IMR-90 (cell line): ENCODE measurements at regions of chr9 and their contacts with region 1.

Region 1: GRCh38 chr9:100120286-100120685 is 21.2 kb downstream of the INVS start:
- DNase-seq: no peak
- ATAC-seq: no peak
- H3K4me3 ChIP-seq: no peak overlapping the region
- H3K27ac ChIP-seq: no peak overlapping the region
- H3K4me1 ChIP-seq: no peaks in the 10 kb centered on the region
- H3K27me3 ChIP-seq: no peaks in the 10 kb centered on the region
- CTCF ChIP-seq: no peak
- POLR2A ChIP-seq: no peak
- RAD21 ChIP-seq: no peak

Region 2: DNA sequence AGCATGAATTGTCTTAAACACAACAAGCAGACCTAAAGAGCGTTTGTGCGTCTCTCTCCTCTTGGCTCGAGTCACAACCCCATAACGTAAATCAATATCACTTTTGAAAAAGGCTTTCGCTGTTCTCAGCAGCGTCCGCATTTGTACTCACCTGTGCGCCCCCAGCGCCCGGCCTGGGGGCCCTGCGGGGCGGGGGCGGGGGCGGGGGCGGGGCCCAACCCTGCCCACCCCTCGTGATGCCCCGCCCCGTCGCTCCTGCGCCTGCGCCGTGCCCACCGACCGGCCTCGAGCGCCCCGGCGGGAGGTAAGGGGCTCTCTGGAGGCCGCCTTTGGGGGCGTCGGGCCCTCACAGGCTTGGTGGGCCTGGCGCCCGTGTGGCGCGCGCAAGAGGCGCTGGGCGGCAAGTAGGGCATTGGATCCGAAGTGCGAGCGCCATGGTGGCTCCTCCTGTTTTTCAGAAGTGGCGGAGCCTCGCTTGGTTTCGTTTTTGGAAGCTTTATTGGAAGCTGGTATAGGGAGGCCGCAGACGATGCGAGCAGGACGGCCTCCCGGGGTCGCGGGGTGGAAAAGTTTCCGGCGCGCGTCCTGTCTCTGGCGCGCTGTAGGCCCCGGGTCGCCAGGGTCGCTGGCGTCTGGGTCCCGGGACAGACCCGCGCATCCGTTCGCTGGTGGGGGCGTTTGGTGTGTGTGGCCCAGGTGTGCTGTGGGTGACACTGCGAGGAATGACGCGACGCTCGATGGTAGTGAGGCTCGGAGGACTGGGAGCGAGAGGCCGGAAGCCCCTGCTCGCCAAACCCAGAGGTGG is 213.7 kb before region 1 on chr9 and contains the start of gene STX17:
- CTCF ChIA-PET with region 1: no interaction called
- POLR2A ChIA-PET with region 1: no interaction called
- dilution Hi-C with region 1: no loop called
- in situ Hi-C with region 1: no loop called
- intact Hi-C with region 1: loop called (anchors 5 kb)
- DNase-seq: peak; percentile 69
- ATAC-seq: peak; percentile 97
- H3K4me3 ChIP-seq: peak within 1 kb of the TSS; percentile 99
- H3K27ac ChIP-seq: peak within 1 kb of the TSS; percentile 91
- H3K4me1 ChIP-seq: no peaks in the 10 kb centered on the region
- H3K27me3 ChIP-seq: 0 out of 2 replicates have a peak, but pooled peaks cover 2% of the 10 kb centered on the region
- CTCF ChIP-seq: no peak
- POLR2A ChIP-seq: peak; percentile 67
- RAD21 ChIP-seq: no peak
- total RNA-seq, gene STX17: 11.7 and 17.2 TPM in 2 replicates

Region 3: DNA sequence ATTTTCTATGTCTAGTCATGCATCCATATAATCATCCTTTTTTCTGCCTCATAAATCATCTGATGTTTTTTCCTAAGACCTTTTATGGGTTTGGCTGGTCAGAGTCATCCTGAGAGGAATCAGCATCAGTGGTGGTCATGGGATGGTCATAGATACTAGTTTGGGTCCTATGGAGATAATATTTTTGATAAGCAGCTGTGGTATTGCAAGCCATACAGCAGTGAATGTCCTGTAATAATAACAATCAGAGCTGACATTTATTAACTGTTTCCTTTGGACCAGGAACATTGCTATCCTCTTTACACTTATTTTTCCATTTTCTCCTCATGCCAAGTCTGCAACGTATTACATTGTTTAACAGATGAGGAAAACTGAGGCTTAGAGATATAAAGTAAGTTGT is 149.4 kb after region 1 on chr9:
- CTCF ChIA-PET with region 1: no interaction called
- POLR2A ChIA-PET with region 1: no interaction called
- dilution Hi-C with region 1: no loop called
- in situ Hi-C with region 1: no loop called
- intact Hi-C with region 1: no loop called
- DNase-seq: no peak
- ATAC-seq: no peak
- H3K4me3 ChIP-seq: no peak overlapping the region
- H3K27ac ChIP-seq: no peak overlapping the region
- H3K4me1 ChIP-seq: no peaks in the 10 kb centered on the region
- H3K27me3 ChIP-seq: no peaks in the 10 kb centered on the region
- CTCF ChIP-seq: no peak
- POLR2A ChIP-seq: no peak
- RAD21 ChIP-seq: no peak

Region 4: DNA sequence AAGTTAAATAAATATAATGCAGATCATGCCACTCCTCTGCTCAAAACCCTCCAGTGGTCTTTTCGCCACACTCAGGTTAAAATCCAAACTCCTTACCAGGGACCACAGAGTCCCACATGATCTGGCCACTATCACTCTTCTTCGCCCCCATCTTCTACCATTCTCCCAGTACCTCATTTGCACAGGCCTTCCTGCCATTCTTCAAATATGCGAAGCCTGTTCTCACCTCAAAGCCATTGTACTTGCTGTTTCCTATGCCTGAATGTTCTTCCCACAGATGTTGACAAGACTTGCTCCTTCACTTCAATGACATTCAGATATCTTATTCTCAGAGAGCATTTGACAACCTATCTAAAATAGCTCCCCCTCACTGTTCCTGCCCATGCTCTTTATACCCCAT is 221.6 kb after region 1 on chr9:
- CTCF ChIA-PET with region 1: no interaction called
- POLR2A ChIA-PET with region 1: no interaction called
- dilution Hi-C with region 1: no loop called
- in situ Hi-C with region 1: no loop called
- intact Hi-C with region 1: no loop called
- DNase-seq: no peak
- ATAC-seq: no peak
- H3K4me3 ChIP-seq: no peak overlapping the region
- H3K27ac ChIP-seq: no peak overlapping the region
- H3K4me1 ChIP-seq: peaks cover 2% of the 10 kb centered on the region; the same call in 1 of the 2 replicates
- H3K27me3 ChIP-seq: no peaks in the 10 kb centered on the region
- CTCF ChIP-seq: no peak
- POLR2A ChIP-seq: no peak
- RAD21 ChIP-seq: no peak